Thyroid gland (tissue), 4 donors: ENCODE measurements at regions of chr1 and their contacts with region 1.

Region 1: DNA sequence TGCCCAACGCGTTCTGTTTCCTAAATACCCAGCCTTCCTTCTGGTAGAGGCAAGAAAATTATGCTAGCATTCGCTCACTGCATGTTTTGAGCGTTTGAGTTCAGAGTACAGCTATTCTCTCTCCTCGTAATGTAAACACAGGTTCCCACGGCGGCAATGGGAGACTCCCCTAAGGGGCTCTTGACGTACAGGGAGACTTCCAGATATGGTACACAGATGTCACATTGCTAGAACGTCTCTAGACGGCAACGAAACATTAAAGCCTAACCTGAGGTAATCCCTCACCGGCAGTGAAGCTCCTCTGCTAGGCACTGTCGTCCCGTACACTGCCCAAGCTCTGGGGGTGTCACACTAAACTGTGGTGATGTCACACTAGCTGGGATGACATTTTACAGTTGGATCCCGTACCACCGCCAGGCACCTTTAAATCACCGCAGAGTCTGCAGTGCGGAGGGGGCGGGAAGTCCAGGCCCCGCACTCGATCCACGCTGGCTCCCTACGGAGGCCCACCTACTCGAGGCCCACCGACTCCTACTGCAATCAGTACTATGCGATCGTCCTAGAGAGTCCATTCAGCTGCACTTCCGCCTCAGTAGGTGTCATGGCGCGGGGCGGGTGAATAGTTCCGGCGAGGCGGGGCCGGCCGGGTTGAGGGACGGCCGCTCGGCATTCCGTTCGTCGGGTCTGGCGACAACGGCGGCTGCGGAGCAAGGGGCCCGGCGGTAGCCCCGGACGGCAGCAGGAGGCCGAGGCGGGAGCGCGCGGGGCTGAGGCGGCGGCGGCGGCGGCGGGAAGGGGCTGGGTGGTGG is at the start of gene HIPK1:
- DNase-seq: peak; percentile 89 to 95
- H3K4me3 ChIP-seq: peak within 1 kb of the TSS; percentile 62 to 96 (median 95)
- H3K27ac ChIP-seq: peak within 1 kb of the TSS; percentile 82 to 94 (median 88)
- H3K4me1 ChIP-seq: peaks cover 26 to 29% of the 10 kb centered on the region in 2 donors
- H3K27me3 ChIP-seq: no peaks in the 10 kb centered on the region
- CTCF ChIP-seq: peak in 1 of 6 experiments; percentile 32
- POLR2A ChIP-seq: peak in 1 of 2 donors; percentile 84
- total RNA-seq, gene HIPK1: 65.8 to 102 (median 84.7) TPM

Region 2: DNA sequence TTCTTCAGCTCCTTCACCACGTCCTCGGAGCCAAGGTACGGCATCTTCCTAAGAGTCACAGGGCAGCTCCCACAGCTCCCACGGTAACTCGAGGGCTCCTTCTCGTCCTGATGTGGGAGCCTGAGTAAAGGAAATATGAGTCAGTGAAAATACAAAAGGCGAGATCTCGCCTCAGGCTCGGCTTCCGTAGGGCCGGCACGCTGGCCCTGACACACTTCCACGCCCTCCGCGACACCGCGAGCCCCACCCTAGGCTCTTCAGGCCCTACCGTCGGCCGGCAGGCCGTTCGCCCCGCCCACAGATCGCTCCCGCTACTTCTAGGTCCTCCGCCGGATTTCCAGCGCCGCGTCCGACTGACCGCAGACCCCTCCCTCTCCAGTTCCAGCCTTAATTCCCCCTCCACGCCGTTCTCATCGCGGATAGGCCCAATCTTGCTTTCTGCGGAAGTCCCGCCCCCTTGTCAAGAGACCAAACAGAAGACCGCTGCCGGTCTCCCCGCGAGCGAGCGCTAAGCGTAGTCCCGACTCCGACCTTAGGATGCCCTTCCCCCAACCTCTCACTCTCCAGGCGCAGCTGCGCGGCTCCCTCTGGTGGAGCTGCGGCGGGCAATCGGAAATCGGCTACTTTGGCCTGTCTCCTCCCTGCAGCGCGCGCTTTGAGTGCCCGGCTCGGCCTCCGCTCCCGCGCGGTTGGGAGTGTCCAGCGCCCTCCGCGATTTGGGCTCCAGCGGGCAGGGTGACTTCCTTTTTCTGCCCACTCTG is 24.3 kb before region 1 on chr1 and contains the starts of genes AP4B1 and DCLRE1B:
- intact Hi-C with region 1: loop called (anchors 2 kb)
- DNase-seq: peak; percentile 99
- H3K4me3 ChIP-seq: peak within 1 kb of the TSS; percentile 63 to 86 (median 69)
- H3K27ac ChIP-seq: peak within 1 kb of the TSS; percentile 58 to 94 (median 93)
- H3K4me1 ChIP-seq: peaks cover 8 to 11% of the 10 kb centered on the region in 2 donors
- H3K27me3 ChIP-seq: no peaks in the 10 kb centered on the region
- CTCF ChIP-seq: peak; percentile 13 to 84 (median 64)
- POLR2A ChIP-seq: peak in 1 of 2 donors; percentile 74
- total RNA-seq, gene AP4B1: 9.7 to 14.8 (median 14.0) TPM
- total RNA-seq, gene DCLRE1B: 3.2 to 5.0 (median 4.1) TPM

Region 3: GRCh38 chr1:113998327-113998726 is 69.2 kb after region 1 on chr1:
- intact Hi-C with region 1: no loop called
- DNase-seq: no peak
- H3K4me3 ChIP-seq: no peak overlapping the region
- H3K27ac ChIP-seq: no peak overlapping the region
- H3K4me1 ChIP-seq: no peaks in the 10 kb centered on the region
- H3K27me3 ChIP-seq: no peaks in the 10 kb centered on the region
- CTCF ChIP-seq: no peak
- POLR2A ChIP-seq: no peak